AG04449 (cell line): ENCODE measurements at regions of chr10 and their contacts with region 1.

Region 1: DNA sequence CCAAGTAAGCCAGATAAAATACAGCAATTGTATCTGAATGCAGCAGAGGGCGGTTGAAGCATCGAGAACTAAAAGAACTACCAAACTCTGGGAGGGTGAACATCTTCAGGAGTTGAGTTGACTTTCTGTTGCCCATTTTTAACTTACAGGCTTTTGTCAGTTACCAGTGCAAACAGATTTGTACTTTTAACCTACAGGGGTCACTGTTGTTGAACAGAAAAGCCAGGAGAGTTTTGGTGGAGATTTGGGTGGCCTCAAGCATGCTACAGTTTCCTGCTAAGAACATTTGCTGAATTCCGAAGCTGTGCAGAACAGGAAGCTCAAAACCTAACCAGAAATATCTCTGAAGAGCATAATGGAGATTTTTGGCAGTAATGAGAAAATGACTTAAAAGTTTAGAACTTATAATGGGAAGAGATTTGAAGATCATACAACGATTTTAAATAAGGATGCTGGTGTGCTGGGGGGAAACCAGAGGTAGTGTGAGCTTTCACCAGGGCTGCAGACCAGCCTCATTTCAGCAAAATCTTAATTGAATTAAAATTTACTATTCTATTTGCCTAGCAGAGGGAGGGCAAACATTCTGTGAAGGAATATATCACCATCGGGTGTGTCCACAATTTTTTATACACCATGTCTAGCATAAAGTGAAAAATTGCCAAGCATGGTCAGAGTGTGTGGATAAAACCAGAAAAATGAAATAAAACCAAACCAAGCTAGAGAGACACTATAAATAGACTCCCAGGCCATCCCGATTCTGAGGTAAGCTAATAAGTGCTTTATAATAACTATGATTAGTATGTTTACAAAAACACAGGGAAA is 208.6 kb upstream of the CCDC6 start:
- DNase-seq: peak; percentile 52
- H3K4me3 ChIP-seq: no peak overlapping the region
- CTCF ChIP-seq: peak; percentile 42

Region 2: DNA sequence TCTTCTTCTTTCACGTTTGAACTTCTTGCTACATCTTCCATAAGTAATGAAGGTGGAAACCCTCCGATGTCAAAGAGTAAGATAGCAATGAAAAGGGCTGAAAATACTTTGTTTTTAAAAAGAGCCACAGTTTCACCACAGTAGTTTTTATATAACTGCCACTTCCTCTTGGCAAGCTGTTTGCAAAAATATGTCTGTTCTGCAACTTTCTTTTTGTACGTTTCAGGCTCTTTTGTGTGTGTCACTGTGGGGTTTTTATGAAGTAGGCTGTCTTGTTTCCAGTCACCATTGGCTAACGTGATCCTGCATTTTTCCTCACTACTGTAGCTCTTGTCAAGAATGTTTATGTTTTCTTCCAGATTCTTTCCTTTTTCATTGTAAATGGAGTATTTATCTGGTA is 461.0 kb before region 1 on chr10:
- CTCF ChIA-PET with region 1: no interaction called
- POLR2A ChIA-PET with region 1: no interaction called
- DNase-seq: no peak
- H3K4me3 ChIP-seq: no peak overlapping the region
- CTCF ChIP-seq: no peak

Region 3: GRCh38 chr10:60099998-60100747 is 14.8 kb before region 1 on chr10:
- CTCF ChIA-PET with region 1: interaction called, 45 read pairs
- POLR2A ChIA-PET with region 1: no interaction called
- DNase-seq: no peak
- H3K4me3 ChIP-seq: no peak overlapping the region
- CTCF ChIP-seq: peak; percentile 44

Region 4: GRCh38 chr10:60140651-60141632 is 26.0 kb after region 1 on chr10:
- CTCF ChIA-PET with region 1: interaction called, 32 read pairs
- POLR2A ChIA-PET with region 1: no interaction called
- DNase-seq: no peak
- H3K4me3 ChIP-seq: peak overlapping the region; percentile 9; the same call in 1 of the 2 replicates
- CTCF ChIP-seq: no peak

Region 5: GRCh38 chr10:60189861-60190475 is 75.0 kb after region 1 on chr10:
- CTCF ChIA-PET with region 1: interaction called, 15 read pairs
- POLR2A ChIA-PET with region 1: no interaction called
- DNase-seq: no peak
- H3K4me3 ChIP-seq: no peak overlapping the region
- CTCF ChIP-seq: no peak

Region 6: DNA sequence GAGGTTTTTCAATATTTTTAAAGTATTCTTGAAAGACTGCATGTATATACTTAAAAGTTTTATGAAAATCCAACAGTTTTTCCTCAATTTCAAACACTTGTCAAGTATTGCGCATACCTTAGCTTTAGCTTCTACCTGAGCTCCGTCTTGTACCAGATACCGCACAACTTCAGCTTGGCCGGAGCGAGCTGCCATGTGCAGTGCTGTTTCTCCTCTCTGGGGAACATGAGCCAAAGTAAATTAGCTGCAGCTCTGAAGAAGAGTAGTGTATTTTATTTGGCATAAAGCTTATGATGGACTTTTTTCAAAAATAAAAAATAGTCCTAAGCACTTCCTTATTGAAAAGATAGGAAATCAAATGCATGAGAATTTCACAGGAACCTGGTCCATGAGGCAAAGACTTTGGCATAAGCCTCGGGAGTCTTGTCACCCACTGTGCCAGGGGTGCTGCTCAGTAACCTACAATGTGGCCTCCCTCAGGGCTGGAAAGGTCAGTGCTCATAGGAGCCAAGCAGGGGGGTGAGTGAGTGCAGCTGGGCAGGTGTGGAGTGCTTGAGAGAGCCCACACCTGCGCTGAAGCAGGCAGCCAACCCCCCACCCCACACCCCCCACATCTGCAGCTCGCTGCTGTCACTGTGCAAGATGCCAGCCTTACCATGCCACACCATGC is 85.2 kb after region 1 on chr10:
- CTCF ChIA-PET with region 1: interaction called, 234 read pairs
- POLR2A ChIA-PET with region 1: no interaction called
- DNase-seq: no peak
- H3K4me3 ChIP-seq: no peak overlapping the region
- CTCF ChIP-seq: no peak

Region 7: GRCh38 chr10:60434418-60435046 is 319.6 kb after region 1 on chr10:
- CTCF ChIA-PET with region 1: interaction called, 86 read pairs
- POLR2A ChIA-PET with region 1: no interaction called
- DNase-seq: no peak
- H3K4me3 ChIP-seq: no peak overlapping the region
- CTCF ChIP-seq: peak; percentile 49